HCT116 (cell line): ENCODE measurements at regions of chr2 and their contacts with region 1.

Region 1: GRCh38 chr2:205885492-205886099 is 200.4 kb downstream of the INO80D start:
- DNase-seq: peak; percentile 68
- ATAC-seq: peak; percentile 99
- H3K4me3 ChIP-seq: no peak overlapping the region
- H3K27ac ChIP-seq: no peak overlapping the region
- H3K4me1 ChIP-seq: peaks cover 0 to 3% of the 10 kb centered on the region in 2 experiments; a peak in 2 of 4 replicates
- H3K27me3 ChIP-seq: no peaks in the 10 kb centered on the region
- CTCF ChIP-seq: peak; percentile 92 to 97 (median 94)
- POLR2A ChIP-seq: no peak
- RAD21 ChIP-seq: peak; percentile 94

Region 2: DNA sequence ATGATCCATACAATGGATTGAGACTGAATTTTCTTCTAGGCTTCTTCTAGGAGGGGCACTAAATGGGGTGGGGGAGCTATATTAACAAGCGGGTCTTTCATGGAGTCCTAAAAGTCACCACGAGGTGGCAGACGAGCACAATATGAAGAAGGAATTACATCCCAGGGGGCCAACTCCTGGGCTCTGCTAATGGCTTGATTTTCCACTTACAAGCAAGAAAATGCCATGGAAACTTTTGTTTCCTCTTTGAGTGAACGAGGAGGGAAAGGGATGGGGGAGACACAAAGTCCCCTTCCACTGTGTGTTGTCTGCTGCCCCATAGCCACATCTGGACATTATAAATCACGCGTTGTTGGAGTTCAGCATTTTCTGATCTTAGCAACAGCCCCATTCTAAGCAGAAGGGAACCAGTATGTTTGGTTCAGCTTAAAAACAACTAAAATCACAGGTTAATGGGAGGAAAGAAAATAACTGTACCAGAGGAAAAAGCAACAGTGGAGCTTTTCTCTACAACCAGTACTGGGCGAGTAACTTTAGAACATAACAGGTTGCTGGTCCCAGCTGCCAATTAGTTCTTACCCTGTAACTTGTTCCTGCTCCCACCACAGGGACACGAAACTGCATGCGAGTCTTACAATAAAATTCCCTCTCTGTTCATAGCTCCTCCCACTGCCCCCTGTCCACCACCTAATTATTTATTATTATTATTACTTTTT is 1625.3 kb before region 1 on chr2:
- CTCF ChIA-PET with region 1: no interaction called
- POLR2A ChIA-PET with region 1: no interaction called
- RAD21 ChIA-PET with region 1: no interaction called
- intact Hi-C with region 1: loop called (anchors 1 kb)
- DNase-seq: peak; percentile 65
- ATAC-seq: peak; percentile 91
- H3K4me3 ChIP-seq: no peak overlapping the region
- H3K27ac ChIP-seq: no peak overlapping the region
- H3K4me1 ChIP-seq: peaks cover 3 to 9% of the 10 kb centered on the region in 2 experiments; a peak in 3 of 4 replicates
- H3K27me3 ChIP-seq: no peaks in the 10 kb centered on the region
- CTCF ChIP-seq: peak; percentile 69 to 84 (median 81)
- POLR2A ChIP-seq: no peak
- RAD21 ChIP-seq: peak; percentile 70

Region 3: DNA sequence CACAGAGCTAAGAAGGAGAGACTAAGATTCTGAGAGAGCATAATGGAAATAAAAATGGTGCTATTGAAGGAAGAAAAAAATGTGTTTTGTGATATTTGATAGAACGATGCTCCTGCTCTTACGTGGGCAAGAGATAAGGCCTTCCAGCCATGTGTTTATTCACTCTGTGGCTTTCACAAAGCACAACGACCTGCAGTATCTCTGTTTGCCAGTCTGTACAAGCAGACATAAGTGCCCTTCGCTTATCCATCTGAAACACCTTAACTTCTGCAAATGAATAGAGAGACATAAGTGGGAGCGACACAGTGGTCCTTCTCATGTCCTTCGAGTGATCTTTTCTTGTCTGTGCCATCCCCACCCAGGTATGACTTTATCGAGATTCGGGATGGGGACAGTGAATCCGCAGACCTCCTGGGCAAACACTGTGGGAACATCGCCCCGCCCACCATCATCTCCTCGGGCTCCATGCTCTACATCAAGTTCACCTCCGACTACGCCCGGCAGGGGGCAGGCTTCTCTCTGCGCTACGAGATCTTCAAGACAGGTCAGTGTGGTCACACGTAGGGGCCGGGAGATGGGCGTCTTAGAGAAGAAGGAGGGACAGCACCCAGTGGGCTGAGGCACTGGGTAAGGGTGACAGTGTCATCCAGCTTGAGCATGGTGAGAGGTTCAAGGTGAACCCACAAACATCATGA is 169.6 kb before region 1 on chr2:
- CTCF ChIA-PET with region 1: no interaction called
- POLR2A ChIA-PET with region 1: no interaction called
- RAD21 ChIA-PET with region 1: no interaction called
- intact Hi-C with region 1: loop called (anchors 1 kb)
- DNase-seq: peak; percentile 71
- ATAC-seq: peak; percentile 98
- H3K4me3 ChIP-seq: no peak overlapping the region
- H3K27ac ChIP-seq: no peak overlapping the region
- H3K4me1 ChIP-seq: peaks cover 0 to 5% of the 10 kb centered on the region in 2 experiments; a peak in 1 of 4 replicates
- H3K27me3 ChIP-seq: peaks cover 7% of the 10 kb centered on the region; the same call in 1 of the 2 replicates
- CTCF ChIP-seq: peak; percentile 76 to 86 (median 86)
- POLR2A ChIP-seq: no peak
- RAD21 ChIP-seq: peak; percentile 74

Region 4: GRCh38 chr2:205872716-205873115 is 12.9 kb before region 1 on chr2:
- CTCF ChIA-PET with region 1: no interaction called
- POLR2A ChIA-PET with region 1: no interaction called
- RAD21 ChIA-PET with region 1: no interaction called
- intact Hi-C with region 1: no loop called
- DNase-seq: no peak
- ATAC-seq: no peak
- H3K4me3 ChIP-seq: no peak overlapping the region
- H3K27ac ChIP-seq: no peak overlapping the region
- H3K4me1 ChIP-seq: no peaks in the 10 kb centered on the region
- H3K27me3 ChIP-seq: no peaks in the 10 kb centered on the region
- CTCF ChIP-seq: no peak
- POLR2A ChIP-seq: no peak
- RAD21 ChIP-seq: no peak